ENCODE measurements at regions of chr14 and their contacts with region 1.

Region 1: GRCh38 chr14:105999361-106000028 is 473.1 kb downstream of the TMEM121 start:
- DNase-seq: peak; percentile 78 to 88
- ATAC-seq: peak; percentile 82 to 96 (median 84)
- H3K4me3 ChIP-seq: no peak overlapping the region
- H3K4me3 Mint-ChIP-seq: peak overlapping the region; percentile 9
- H3K27ac ChIP-seq: no peak overlapping the region
- H3K27ac Mint-ChIP-seq: peak overlapping the region; percentile 44 to 56
- H3K4me1 ChIP-seq: peaks cover 17% of the 10 kb centered on the region
- H3K4me1 Mint-ChIP-seq: peaks cover 25 to 33% of the 10 kb centered on the region in 2 donors
- H3K27me3 ChIP-seq: no peaks in the 10 kb centered on the region
- H3K27me3 Mint-ChIP-seq: peaks cover 0 to 4% of the 10 kb centered on the region in 2 donors
- CTCF ChIP-seq: peak; percentile 84

Region 2: DNA sequence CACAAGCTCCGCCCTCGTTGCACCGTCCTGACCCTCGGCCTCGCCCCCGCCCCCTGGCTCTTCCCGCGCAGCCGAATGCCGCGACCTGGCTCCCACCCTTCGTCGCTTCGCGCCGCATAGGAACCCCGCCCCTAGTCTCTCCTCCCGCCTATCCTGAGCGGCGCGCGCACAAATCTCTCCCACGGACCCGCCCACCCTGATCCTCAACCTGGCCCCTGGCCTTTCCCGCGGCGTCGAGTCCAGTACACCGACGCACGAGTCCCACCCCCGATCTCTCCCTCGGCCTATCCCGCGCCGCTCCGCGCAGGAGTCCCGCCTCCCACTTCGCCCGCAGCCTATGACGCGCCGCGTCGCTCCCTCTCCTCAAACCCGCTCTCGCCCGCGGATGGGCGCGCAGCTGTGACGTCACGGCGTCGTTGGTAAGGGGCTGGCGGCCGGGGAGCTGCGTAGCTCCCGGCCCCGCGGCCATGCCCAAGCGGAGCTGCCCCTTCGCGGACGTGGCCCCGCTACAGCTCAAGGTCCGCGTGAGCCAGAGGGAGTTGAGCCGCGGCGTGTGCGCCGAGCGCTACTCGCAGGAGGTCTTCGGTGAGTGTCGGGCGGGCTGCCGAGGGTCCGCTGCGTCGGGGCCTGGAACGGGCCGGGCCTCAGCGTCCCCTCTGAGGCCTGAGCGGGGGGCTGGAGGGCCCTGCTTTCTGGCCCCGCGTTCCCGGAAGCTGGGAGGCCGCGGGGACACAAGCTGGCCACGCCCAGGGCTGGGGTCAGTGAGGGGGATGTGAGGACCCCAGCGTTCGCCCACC is 1246.6 kb before region 1 on chr14 and contains the start of gene SIVA1:
- intact Hi-C with region 1: no loop called
- DNase-seq: peak; percentile 98 to 100
- ATAC-seq: peak; percentile 88 to 95 (median 88)
- H3K4me3 ChIP-seq: peak within 1 kb of the TSS; percentile 87
- H3K4me3 Mint-ChIP-seq: peak within 1 kb of the TSS; percentile 97
- H3K27ac ChIP-seq: peak within 1 kb of the TSS; percentile 84
- H3K27ac Mint-ChIP-seq: peak within 1 kb of the TSS; percentile 90 to 97
- H3K4me1 ChIP-seq: peaks cover 37% of the 10 kb centered on the region
- H3K4me1 Mint-ChIP-seq: peaks cover 25 to 34% of the 10 kb centered on the region in 2 donors
- H3K27me3 ChIP-seq: no peaks in the 10 kb centered on the region
- H3K27me3 Mint-ChIP-seq: no peaks in the 10 kb centered on the region
- CTCF ChIP-seq: no peak
- total RNA-seq, gene SIVA1: 59.7 to 74.8 (median 59.8) TPM

Region 3: DNA sequence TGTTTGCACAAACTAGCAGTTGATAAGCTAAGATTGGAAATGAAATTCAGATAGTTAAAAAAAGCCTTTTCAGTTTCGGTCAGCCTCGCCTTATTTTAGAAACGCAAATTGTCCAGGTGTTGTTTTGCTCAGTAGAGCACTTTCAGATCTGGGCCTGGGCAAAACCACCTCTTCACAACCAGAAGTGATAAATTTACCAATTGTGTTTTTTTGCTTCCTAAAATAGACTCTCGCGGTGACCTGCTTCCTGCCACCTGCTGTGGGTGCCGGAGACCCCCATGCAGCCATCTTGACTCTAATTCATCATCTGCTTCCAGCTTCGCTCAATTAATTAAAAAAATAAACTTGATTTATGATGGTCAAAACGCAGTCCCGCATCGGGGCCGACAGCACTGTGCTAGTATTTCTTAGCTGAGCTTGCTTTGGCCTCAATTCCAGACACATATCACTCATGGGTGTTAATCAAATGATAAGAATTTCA is 137.5 kb before region 1 on chr14:
- intact Hi-C with region 1: no loop called
- DNase-seq: peak; percentile 13 to 47
- ATAC-seq: peak in 2 of 3 donors; percentile 31 to 57
- H3K4me3 ChIP-seq: peak overlapping the region; percentile 51
- H3K4me3 Mint-ChIP-seq: peak overlapping the region; percentile 50
- H3K27ac ChIP-seq: peak overlapping the region; percentile 84
- H3K27ac Mint-ChIP-seq: no peak overlapping the region
- H3K4me1 ChIP-seq: peaks cover 54% of the 10 kb centered on the region
- H3K4me1 Mint-ChIP-seq: peaks cover 21 to 25% of the 10 kb centered on the region in 2 donors
- H3K27me3 ChIP-seq: peaks cover 2% of the 10 kb centered on the region
- H3K27me3 Mint-ChIP-seq: peaks cover 38 to 43% of the 10 kb centered on the region in 2 donors
- CTCF ChIP-seq: no peak

Region 4: GRCh38 chr14:105944632-105945610 is 54.6 kb before region 1 on chr14:
- intact Hi-C with region 1: loop called (anchors 10 kb)
- DNase-seq: peak; percentile 68 to 83
- ATAC-seq: peak; percentile 70 to 79 (median 77)
- H3K4me3 ChIP-seq: no peak overlapping the region
- H3K4me3 Mint-ChIP-seq: no peak overlapping the region
- H3K27ac ChIP-seq: no peak overlapping the region
- H3K27ac Mint-ChIP-seq: no peak overlapping the region
- H3K4me1 ChIP-seq: peaks cover 23% of the 10 kb centered on the region
- H3K4me1 Mint-ChIP-seq: peaks cover 0 to 22% of the 10 kb centered on the region in 2 donors
- H3K27me3 ChIP-seq: no peaks in the 10 kb centered on the region
- H3K27me3 Mint-ChIP-seq: peaks cover 21 to 26% of the 10 kb centered on the region in 2 donors
- CTCF ChIP-seq: peak; percentile 73

Region 5: DNA sequence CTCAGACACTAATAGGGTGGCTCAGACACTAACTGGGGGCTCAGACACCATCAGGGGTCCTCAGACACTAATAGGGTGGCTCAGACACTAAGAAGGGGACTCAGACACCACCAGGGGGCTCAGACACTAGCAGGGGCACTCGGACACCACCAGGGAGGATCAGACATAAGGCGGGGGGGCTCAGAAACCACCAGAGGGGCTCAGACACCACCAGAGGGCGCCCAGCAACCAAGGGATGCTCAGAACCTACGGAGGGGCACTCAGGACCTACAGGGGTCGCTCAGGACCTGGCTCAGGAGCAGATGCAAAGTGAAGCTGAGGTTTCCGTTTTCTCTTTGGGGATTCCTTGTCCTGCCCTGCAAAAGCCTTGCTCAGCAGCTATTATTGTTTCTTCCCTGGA is 24.6 kb before region 1 on chr14:
- intact Hi-C with region 1: loop called (anchors 1 kb)
- DNase-seq: peak; percentile 67 to 87
- ATAC-seq: peak; percentile 70 to 97 (median 90)
- H3K4me3 ChIP-seq: no peak overlapping the region
- H3K4me3 Mint-ChIP-seq: no peak overlapping the region
- H3K27ac ChIP-seq: no peak overlapping the region
- H3K27ac Mint-ChIP-seq: no peak overlapping the region
- H3K4me1 ChIP-seq: peaks cover 5% of the 10 kb centered on the region
- H3K4me1 Mint-ChIP-seq: peaks cover 2 to 7% of the 10 kb centered on the region in 2 donors
- H3K27me3 ChIP-seq: peaks cover 21% of the 10 kb centered on the region
- H3K27me3 Mint-ChIP-seq: peaks cover 61 to 75% of the 10 kb centered on the region in 2 donors
- CTCF ChIP-seq: peak; percentile 61

Region 6: GRCh38 chr14:105986894-105987284 is 12.6 kb before region 1 on chr14:
- intact Hi-C with region 1: loop called (anchors 2 kb)
- DNase-seq: peak in 1 of 2 donors; percentile 23
- ATAC-seq: peak; percentile 30 to 41 (median 32)
- H3K4me3 ChIP-seq: no peak overlapping the region
- H3K4me3 Mint-ChIP-seq: peak overlapping the region; percentile 65
- H3K27ac ChIP-seq: no peak overlapping the region
- H3K27ac Mint-ChIP-seq: peak overlapping the region; percentile 73 to 74
- H3K4me1 ChIP-seq: peaks cover 40% of the 10 kb centered on the region
- H3K4me1 Mint-ChIP-seq: peaks cover 51 to 62% of the 10 kb centered on the region in 2 donors
- H3K27me3 ChIP-seq: peaks cover 3% of the 10 kb centered on the region
- H3K27me3 Mint-ChIP-seq: peaks cover 12 to 20% of the 10 kb centered on the region in 2 donors
- CTCF ChIP-seq: no peak

Measured in natural killer cell (primary cell).